ENCODE measurements at regions of chr5 and their contacts with region 1.

Region 1: GRCh38 chr5:141524604-141525597 is 36.0 kb downstream of the PCDHGC5 start:
- DNase-seq: peak; percentile 64 to 89 (median 80)
- H3K4me3 ChIP-seq: no peak overlapping the region
- H3K4me3 Mint-ChIP-seq: no peak overlapping the region
- H3K27ac ChIP-seq: peak overlapping the region in 1 of 2 donors; percentile 15
- H3K27ac Mint-ChIP-seq: peak overlapping the region in 5 of 7 donors; percentile 22 to 82 (median 47)
- H3K4me1 ChIP-seq: peaks cover 30 to 32% of the 10 kb centered on the region in 2 donors
- H3K4me1 Mint-ChIP-seq: peaks cover 42% of the 10 kb centered on the region
- H3K27me3 ChIP-seq: no peaks in the 10 kb centered on the region
- H3K27me3 Mint-ChIP-seq: no peaks in the 10 kb centered on the region
- CTCF ChIP-seq: peak; percentile 99

Region 2: GRCh38 chr5:140595538-140596300 is 929.2 kb before region 1 on chr5:
- intact Hi-C with region 1: no loop called
- DNase-seq: peak; percentile 92 to 97 (median 95)
- H3K4me3 ChIP-seq: peak overlapping the region in 1 of 3 experiments; percentile 52
- H3K4me3 Mint-ChIP-seq: peak overlapping the region; percentile 49 to 72
- H3K27ac ChIP-seq: peak overlapping the region; percentile 96 to 97
- H3K27ac Mint-ChIP-seq: peak overlapping the region; percentile 95 to 99 (median 97)
- H3K4me1 ChIP-seq: peaks cover 74 to 89% of the 10 kb centered on the region in 2 donors
- H3K4me1 Mint-ChIP-seq: peaks cover 72% of the 10 kb centered on the region
- H3K27me3 ChIP-seq: no peaks in the 10 kb centered on the region
- H3K27me3 Mint-ChIP-seq: no peaks in the 10 kb centered on the region
- CTCF ChIP-seq: no peak

Region 3: GRCh38 chr5:141320225-141321169 is 204.4 kb before region 1 on chr5 and contains the start of gene TAF7:
- intact Hi-C with region 1: loop called in 1 of 2 experiments (anchors 5 kb)
- DNase-seq: peak; percentile 89 to 91 (median 91)
- H3K4me3 ChIP-seq: peak within 1 kb of the TSS; percentile 79 to 92 (median 86)
- H3K4me3 Mint-ChIP-seq: peak within 1 kb of the TSS; percentile 89 to 96
- H3K27ac ChIP-seq: peak within 1 kb of the TSS; percentile 92 to 95
- H3K27ac Mint-ChIP-seq: peak within 1 kb of the TSS; percentile 98 to 100 (median 98)
- H3K4me1 ChIP-seq: peaks cover 11 to 16% of the 10 kb centered on the region in 2 donors
- H3K4me1 Mint-ChIP-seq: peaks cover 16% of the 10 kb centered on the region
- H3K27me3 ChIP-seq: peaks cover 0 to 2% of the 10 kb centered on the region in 2 donors
- H3K27me3 Mint-ChIP-seq: peaks cover 2 to 6% (median 5%) of the 10 kb centered on the region in 3 donors
- CTCF ChIP-seq: peak; percentile 87
- polyA plus RNA-seq, gene TAF7: 11.8 to 57.5 (median 52.7) TPM

Region 4: DNA sequence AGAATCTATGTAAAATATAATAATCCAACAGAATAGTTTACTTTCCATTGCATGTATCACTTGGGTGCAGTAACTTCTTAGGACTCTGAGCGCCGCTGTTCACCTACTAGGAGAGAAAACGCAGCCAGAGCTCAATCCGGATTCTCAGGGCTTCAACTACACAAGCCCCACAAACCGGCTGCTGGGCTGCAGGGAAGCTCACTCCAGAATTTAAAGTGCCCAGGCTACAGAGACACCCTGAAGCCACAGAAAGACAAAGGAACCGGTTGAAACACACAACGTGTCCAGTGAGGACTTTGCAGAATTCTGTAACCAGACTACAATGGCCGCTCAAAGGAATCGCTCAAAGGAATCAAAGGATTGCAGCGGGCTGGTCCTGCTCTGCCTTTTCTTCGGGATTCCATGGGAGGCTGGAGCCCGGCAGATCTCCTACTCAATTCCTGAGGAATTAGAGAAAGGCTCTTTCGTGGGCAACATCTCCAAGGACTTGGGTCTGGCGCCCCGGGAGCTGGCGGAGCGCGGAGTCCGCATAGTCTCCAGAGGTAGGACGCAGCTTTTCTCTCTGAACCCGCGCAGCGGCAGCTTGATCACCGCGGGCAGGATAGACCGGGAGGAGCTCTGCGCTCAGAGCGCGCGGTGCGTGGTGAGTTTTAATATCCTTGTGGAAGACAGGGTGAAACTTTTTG is 111.9 kb before region 1 on chr5 and contains the start of gene PCDHGA10:
- intact Hi-C with region 1: loop called (anchors 5 kb)
- DNase-seq: peak; percentile 27 to 44 (median 43)
- H3K4me3 ChIP-seq: peak within 1 kb of the TSS; percentile 3 to 73 (median 33)
- H3K4me3 Mint-ChIP-seq: peak within 1 kb of the TSS; percentile 80 to 88
- H3K27ac ChIP-seq: no peak within 1 kb of the TSS
- H3K27ac Mint-ChIP-seq: no peak within 1 kb of the TSS
- H3K4me1 ChIP-seq: peaks cover 16 to 22% of the 10 kb centered on the region in 2 donors
- H3K4me1 Mint-ChIP-seq: peaks cover 25% of the 10 kb centered on the region
- H3K27me3 ChIP-seq: peaks cover 74 to 100% of the 10 kb centered on the region in 2 donors
- H3K27me3 Mint-ChIP-seq: peaks cover 79 to 86% (median 84%) of the 10 kb centered on the region in 3 donors
- CTCF ChIP-seq: peak; percentile 80
- polyA plus RNA-seq, gene PCDHGA10: not detected

Region 5: GRCh38 chr5:141420855-141421496 is 103.9 kb before region 1 on chr5 and contains the start of gene PCDHGA11:
- intact Hi-C with region 1: loop called in 1 of 2 experiments (anchors 5 kb)
- DNase-seq: peak; percentile 56 to 70 (median 67)
- H3K4me3 ChIP-seq: peak within 1 kb of the TSS; percentile 37 to 77 (median 54)
- H3K4me3 Mint-ChIP-seq: peak within 1 kb of the TSS; percentile 84 to 93
- H3K27ac ChIP-seq: no peak within 1 kb of the TSS
- H3K27ac Mint-ChIP-seq: peak within 1 kb of the TSS in 2 of 7 donors; percentile 41 to 73
- H3K4me1 ChIP-seq: peaks cover 19 to 21% of the 10 kb centered on the region in 2 donors
- H3K4me1 Mint-ChIP-seq: peaks cover 32% of the 10 kb centered on the region
- H3K27me3 ChIP-seq: peaks cover 80 to 100% of the 10 kb centered on the region in 2 donors
- H3K27me3 Mint-ChIP-seq: peaks cover 75 to 88% (median 85%) of the 10 kb centered on the region in 3 donors
- CTCF ChIP-seq: peak; percentile 86
- polyA plus RNA-seq, gene PCDHGA11: not detected

Region 6: GRCh38 chr5:141564216-141564692 is 39.4 kb after region 1 on chr5:
- intact Hi-C with region 1: loop called in 1 of 2 experiments (anchors 5 kb)
- DNase-seq: peak; percentile 91 to 94 (median 93)
- H3K4me3 ChIP-seq: no peak overlapping the region
- H3K4me3 Mint-ChIP-seq: no peak overlapping the region
- H3K27ac ChIP-seq: peak overlapping the region in 1 of 2 donors; percentile 55
- H3K27ac Mint-ChIP-seq: peak overlapping the region; percentile 37 to 90 (median 84)
- H3K4me1 ChIP-seq: peaks cover 0 to 10% of the 10 kb centered on the region in 2 donors
- H3K4me1 Mint-ChIP-seq: peaks cover 11% of the 10 kb centered on the region
- H3K27me3 ChIP-seq: no peaks in the 10 kb centered on the region
- H3K27me3 Mint-ChIP-seq: no peaks in the 10 kb centered on the region
- CTCF ChIP-seq: peak; percentile 98

Region 7: DNA sequence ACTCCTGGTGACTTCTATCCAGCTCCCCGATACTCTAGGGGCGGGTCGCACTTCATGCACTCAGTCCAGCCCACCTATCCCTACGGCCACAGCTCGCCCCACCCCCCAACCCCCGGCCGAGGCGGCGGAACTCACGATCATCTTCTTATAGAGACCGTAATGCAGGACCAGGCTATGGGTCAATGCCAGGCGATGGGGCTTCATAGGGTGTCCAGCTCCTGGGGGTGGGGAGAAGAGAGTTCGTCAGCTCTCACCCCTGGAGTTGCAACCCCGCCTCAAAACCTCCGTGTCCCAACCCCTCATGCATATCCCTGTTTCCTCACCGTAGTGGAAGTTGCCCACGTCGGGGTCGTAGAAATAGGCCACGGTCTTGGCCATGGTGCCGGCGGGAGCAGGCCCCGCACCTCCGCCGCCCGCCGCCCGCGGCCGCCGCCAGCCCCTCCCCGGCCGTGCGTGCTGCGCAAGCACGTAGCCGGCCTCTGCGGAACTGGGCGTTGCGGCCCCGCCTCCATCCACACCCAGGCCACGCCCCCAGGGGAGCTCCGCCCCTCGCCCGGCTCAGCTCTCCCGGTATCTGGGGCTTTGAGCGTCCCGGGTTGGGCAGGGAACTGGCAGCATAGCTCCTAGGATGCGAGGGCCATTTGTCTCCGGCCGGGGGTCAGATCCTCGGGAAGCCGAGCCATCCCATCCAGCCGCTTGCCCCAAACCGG is 111.7 kb after region 1 on chr5 and contains the starts of genes HDAC3 and RELL2:
- intact Hi-C with region 1: loop called in 1 of 2 experiments (anchors 5 kb)
- DNase-seq: peak; percentile 85
- H3K4me3 ChIP-seq: peak within 1 kb of the TSS; percentile 59 to 93 (median 86)
- H3K4me3 Mint-ChIP-seq: peak within 1 kb of the TSS; percentile 87 to 93
- H3K27ac ChIP-seq: peak within 1 kb of the TSS; percentile 15 to 88
- H3K27ac Mint-ChIP-seq: peak within 1 kb of the TSS; percentile 84 to 92 (median 87)
- H3K4me1 ChIP-seq: peaks cover 41 to 51% of the 10 kb centered on the region in 2 donors
- H3K4me1 Mint-ChIP-seq: peaks cover 38% of the 10 kb centered on the region
- H3K27me3 ChIP-seq: no peaks in the 10 kb centered on the region
- H3K27me3 Mint-ChIP-seq: peaks cover 0 to 4% (median 0%) of the 10 kb centered on the region in 3 donors
- CTCF ChIP-seq: no peak
- polyA plus RNA-seq, gene HDAC3: 80.5 to 103 (median 82.3) TPM
- polyA plus RNA-seq, gene RELL2: 1.0 to 17.3 (median 1.3) TPM

Measured in CD14-positive monocyte (primary cell).